ENCODE measurements at regions of chr17 and their contacts with region 1.

Region 1: GRCh38 chr17:27670791-27671590 is 40.0 kb downstream of the LGALS9 start:
- DNase-seq: no peak
- ATAC-seq: no peak
- H3K4me3 ChIP-seq: no peak overlapping the region
- H3K4me3 Mint-ChIP-seq: no peak overlapping the region
- H3K27ac ChIP-seq: no peak overlapping the region
- H3K27ac Mint-ChIP-seq: no peak overlapping the region
- H3K4me1 ChIP-seq: no peaks in the 10 kb centered on the region
- H3K4me1 Mint-ChIP-seq: no peaks in the 10 kb centered on the region
- H3K27me3 ChIP-seq: no peaks in the 10 kb centered on the region
- H3K27me3 Mint-ChIP-seq: no peaks in the 10 kb centered on the region
- CTCF ChIP-seq: no peak

Region 2: DNA sequence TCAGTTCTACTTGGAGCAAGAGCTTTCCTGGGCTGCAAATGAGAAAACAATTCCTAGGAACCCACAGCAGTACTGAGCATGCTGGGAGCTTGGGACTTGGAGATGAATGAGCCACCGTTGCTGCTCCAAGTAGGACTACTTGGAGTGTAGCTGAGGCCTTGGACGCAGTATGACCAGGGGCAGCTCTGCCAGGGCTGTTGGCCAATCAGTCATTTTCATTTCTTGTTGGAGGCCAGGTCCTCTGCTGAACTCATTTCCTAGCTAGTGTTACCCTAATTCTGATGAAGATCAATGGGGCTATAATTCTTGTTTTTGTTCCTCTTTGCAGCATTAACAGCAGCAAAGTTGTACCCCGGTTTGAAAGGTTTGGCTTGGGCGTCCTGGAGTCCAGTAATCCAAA is 48.0 kb before region 1 on chr17:
- CTCF ChIA-PET with region 1: no interaction called
- POLR2A ChIA-PET with region 1: no interaction called
- intact Hi-C with region 1: no loop called
- DNase-seq: no peak
- ATAC-seq: no peak
- H3K4me3 ChIP-seq: no peak overlapping the region
- H3K4me3 Mint-ChIP-seq: no peak overlapping the region
- H3K27ac ChIP-seq: no peak overlapping the region
- H3K27ac Mint-ChIP-seq: no peak overlapping the region
- H3K4me1 ChIP-seq: no peaks in the 10 kb centered on the region
- H3K4me1 Mint-ChIP-seq: no peaks in the 10 kb centered on the region
- H3K27me3 ChIP-seq: no peaks in the 10 kb centered on the region
- H3K27me3 Mint-ChIP-seq: no peaks in the 10 kb centered on the region
- CTCF ChIP-seq: no peak

Region 3: GRCh38 chr17:27733773-27734172 is 62.8 kb after region 1 on chr17:
- CTCF ChIA-PET with region 1: no interaction called
- POLR2A ChIA-PET with region 1: no interaction called
- intact Hi-C with region 1: loop called in 1 of 2 experiments (anchors 10 kb)
- DNase-seq: no peak
- ATAC-seq: no peak
- H3K4me3 ChIP-seq: no peak overlapping the region
- H3K4me3 Mint-ChIP-seq: no peak overlapping the region
- H3K27ac ChIP-seq: no peak overlapping the region
- H3K27ac Mint-ChIP-seq: no peak overlapping the region
- H3K4me1 ChIP-seq: no peaks in the 10 kb centered on the region
- H3K4me1 Mint-ChIP-seq: no peaks in the 10 kb centered on the region
- H3K27me3 ChIP-seq: peaks cover 0 to 1% of the 10 kb centered on the region in 2 experiments
- H3K27me3 Mint-ChIP-seq: peaks cover 21% of the 10 kb centered on the region
- CTCF ChIP-seq: no peak

Region 4: DNA sequence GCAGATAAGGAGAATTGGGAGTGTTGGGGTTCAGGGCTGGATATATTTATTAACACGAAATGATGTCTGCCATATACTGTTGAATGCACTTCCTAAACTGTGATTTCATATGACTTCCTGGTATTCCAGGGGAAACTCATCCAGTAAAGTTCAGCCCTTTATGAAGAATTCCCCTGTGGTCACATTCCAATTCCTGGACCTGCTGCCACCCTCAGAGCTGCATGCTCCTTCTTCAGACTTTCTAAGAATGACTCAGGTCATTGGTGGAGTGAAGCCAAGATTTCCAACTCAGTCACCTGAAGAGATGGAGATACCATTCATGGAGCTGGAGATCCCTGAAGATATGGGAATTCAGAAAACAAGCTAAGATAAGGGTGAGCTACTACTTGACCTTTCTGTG is 533.8 kb after region 1 on chr17:
- CTCF ChIA-PET with region 1: no interaction called
- POLR2A ChIA-PET with region 1: no interaction called
- intact Hi-C with region 1: no loop called
- DNase-seq: no peak
- ATAC-seq: no peak
- H3K4me3 ChIP-seq: no peak overlapping the region
- H3K4me3 Mint-ChIP-seq: no peak overlapping the region
- H3K27ac ChIP-seq: no peak overlapping the region
- H3K27ac Mint-ChIP-seq: no peak overlapping the region
- H3K4me1 ChIP-seq: no peaks in the 10 kb centered on the region
- H3K4me1 Mint-ChIP-seq: no peaks in the 10 kb centered on the region
- H3K27me3 ChIP-seq: no peaks in the 10 kb centered on the region
- H3K27me3 Mint-ChIP-seq: peaks cover 23% of the 10 kb centered on the region
- CTCF ChIP-seq: no peak